ENCODE measurements at regions of chr19 and their contacts with region 1.

Region 1: GRCh38 chr19:39390755-39391592 is at the starts of genes MED29 and PAF1:
- DNase-seq: peak; percentile 92 to 99 (median 98)
- H3K4me3 ChIP-seq: peak within 1 kb of the TSS; percentile 96
- H3K4me3 Mint-ChIP-seq: peak within 1 kb of the TSS; percentile 88 to 96 (median 95)
- H3K27ac ChIP-seq: peak within 1 kb of the TSS; percentile 99
- H3K27ac Mint-ChIP-seq: peak within 1 kb of the TSS; percentile 95 to 100 (median 99)
- H3K4me1 ChIP-seq: peaks cover 20% of the 10 kb centered on the region
- H3K4me1 Mint-ChIP-seq: peaks cover 34 to 48% (median 42%) of the 10 kb centered on the region in 3 donors
- H3K27me3 ChIP-seq: no peaks in the 10 kb centered on the region
- H3K27me3 Mint-ChIP-seq: peaks cover 0 to 2% of the 10 kb centered on the region in 2 donors
- total RNA-seq, gene MED29: 39.3 to 39.6 TPM
- total RNA-seq, gene PAF1: 44.6 to 46.9 TPM

Region 2: DNA sequence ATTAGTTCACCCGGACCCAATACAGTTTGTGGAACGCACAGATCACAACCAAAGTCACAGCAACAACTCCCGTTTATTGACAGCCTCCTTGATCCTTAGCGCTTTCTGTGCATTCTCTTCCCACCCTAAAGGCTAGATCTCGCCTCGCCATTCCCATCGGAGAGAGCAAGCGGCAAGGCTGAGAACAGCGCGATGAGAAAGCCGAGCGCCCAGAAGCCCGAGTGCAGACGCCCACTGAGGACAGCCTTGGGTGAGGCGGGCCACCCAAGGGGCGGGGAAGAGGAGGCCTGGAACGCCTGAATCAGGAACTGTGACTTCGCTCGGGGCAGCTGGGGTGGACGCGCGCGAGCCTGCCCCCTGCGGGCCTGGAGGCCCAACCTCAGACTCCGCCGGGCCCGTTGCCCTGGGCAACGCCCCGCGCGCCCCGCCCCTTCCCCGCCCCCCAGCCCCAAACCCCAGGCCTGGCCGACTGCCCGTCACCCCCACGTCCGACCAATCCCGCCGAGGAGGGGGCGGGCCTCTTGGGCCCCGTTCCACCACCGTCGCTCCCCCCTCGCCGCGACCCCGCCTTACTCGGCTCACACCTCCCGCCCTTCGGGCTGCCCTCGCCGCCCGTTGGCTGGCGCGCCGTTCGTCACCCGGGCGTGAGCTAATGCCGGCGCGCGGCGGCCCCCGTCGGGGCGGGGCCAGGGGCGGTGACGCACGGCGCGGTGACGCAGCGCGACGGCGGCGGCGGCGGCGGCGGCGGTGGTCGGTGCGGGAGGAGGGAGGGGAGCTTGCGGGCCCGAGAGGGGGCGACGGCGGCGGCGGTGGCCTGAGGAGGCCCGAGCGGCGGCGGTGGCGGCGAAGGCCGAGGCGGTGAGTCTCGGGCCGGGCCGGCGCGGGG is 49.0 kb before region 1 on chr19 and contains the start of gene SAMD4B:
- CTCF ChIA-PET with region 1: interaction called, 8 read pairs
- POLR2A ChIA-PET with region 1: interaction called, 10 read pairs
- DNase-seq: peak; percentile 99 to 100 (median 100)
- H3K4me3 ChIP-seq: peak within 1 kb of the TSS; percentile 97
- H3K4me3 Mint-ChIP-seq: peak within 1 kb of the TSS; percentile 89 to 99 (median 95)
- H3K27ac ChIP-seq: peak within 1 kb of the TSS; percentile 86
- H3K27ac Mint-ChIP-seq: peak within 1 kb of the TSS; percentile 90 to 99 (median 94)
- H3K4me1 ChIP-seq: peaks cover 57% of the 10 kb centered on the region
- H3K4me1 Mint-ChIP-seq: peaks cover 55 to 75% (median 74%) of the 10 kb centered on the region in 3 donors
- H3K27me3 ChIP-seq: no peaks in the 10 kb centered on the region
- H3K27me3 Mint-ChIP-seq: peaks cover 0 to 1% of the 10 kb centered on the region in 2 donors
- total RNA-seq, gene SAMD4B: 54.3 to 55.6 TPM

Region 3: GRCh38 chr19:39352381-39353255 is 38.4 kb before region 1 on chr19:
- CTCF ChIA-PET with region 1: no interaction called
- POLR2A ChIA-PET with region 1: no interaction called
- DNase-seq: no peak
- H3K4me3 ChIP-seq: no peak overlapping the region
- H3K4me3 Mint-ChIP-seq: no peak overlapping the region
- H3K27ac ChIP-seq: no peak overlapping the region
- H3K27ac Mint-ChIP-seq: peak overlapping the region in 4 of 8 donors; percentile 23 to 82 (median 71)
- H3K4me1 ChIP-seq: no peaks in the 10 kb centered on the region
- H3K4me1 Mint-ChIP-seq: peaks cover 20 to 34% (median 22%) of the 10 kb centered on the region in 3 donors
- H3K27me3 ChIP-seq: no peaks in the 10 kb centered on the region
- H3K27me3 Mint-ChIP-seq: peaks cover 0 to 1% of the 10 kb centered on the region in 2 donors

Region 4: DNA sequence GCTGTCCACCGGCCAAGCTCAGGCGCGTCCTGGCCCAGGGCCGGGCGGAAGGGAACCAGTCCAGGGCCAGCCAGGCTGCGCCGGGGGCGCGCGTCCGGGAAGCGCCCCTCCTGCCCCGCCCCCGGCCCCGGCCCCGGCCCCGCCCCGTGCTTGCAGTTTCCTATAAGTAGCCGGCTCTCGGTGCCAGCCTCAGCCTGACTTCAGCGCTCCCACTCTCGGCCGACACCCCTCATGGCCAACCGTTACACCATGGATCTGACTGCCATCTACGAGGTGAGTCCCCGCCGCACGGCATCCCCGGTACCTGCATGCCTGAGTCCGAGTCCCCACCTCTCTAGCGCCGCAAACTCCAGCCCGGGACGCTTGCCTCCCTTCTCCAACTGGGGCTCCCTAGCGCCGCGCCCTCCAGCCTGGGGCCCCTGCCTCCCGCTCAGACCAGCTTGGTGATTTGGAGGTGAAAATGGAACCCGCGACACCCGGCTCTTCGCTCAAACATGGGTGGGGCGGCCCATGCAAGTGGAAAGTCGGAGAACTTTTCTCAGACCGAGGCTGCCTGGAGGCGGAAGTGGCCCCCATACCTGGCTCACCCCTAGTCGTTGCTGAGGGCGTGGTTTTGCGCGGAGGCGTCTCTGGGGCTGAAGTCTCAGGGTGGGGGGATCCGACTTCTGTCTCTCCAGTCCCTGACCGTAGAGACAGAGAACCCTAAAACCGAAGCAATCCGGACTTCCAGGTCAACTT is 15.9 kb after region 1 on chr19 and contains the start of gene ZFP36:
- CTCF ChIA-PET with region 1: interaction called, 207 read pairs
- POLR2A ChIA-PET with region 1: interaction called, 96 read pairs
- DNase-seq: peak; percentile 86 to 94 (median 87)
- H3K4me3 ChIP-seq: peak within 1 kb of the TSS; percentile 83
- H3K4me3 Mint-ChIP-seq: peak within 1 kb of the TSS; percentile 89 to 96 (median 92)
- H3K27ac ChIP-seq: peak within 1 kb of the TSS; percentile 97
- H3K27ac Mint-ChIP-seq: peak within 1 kb of the TSS; percentile 96 to 100 (median 100)
- H3K4me1 ChIP-seq: peaks cover 60% of the 10 kb centered on the region
- H3K4me1 Mint-ChIP-seq: peaks cover 50 to 67% (median 59%) of the 10 kb centered on the region in 3 donors
- H3K27me3 ChIP-seq: no peaks in the 10 kb centered on the region
- H3K27me3 Mint-ChIP-seq: peaks cover 0 to 36% of the 10 kb centered on the region in 2 donors
- total RNA-seq, gene ZFP36: 32.8 to 36.4 TPM

Region 5: DNA sequence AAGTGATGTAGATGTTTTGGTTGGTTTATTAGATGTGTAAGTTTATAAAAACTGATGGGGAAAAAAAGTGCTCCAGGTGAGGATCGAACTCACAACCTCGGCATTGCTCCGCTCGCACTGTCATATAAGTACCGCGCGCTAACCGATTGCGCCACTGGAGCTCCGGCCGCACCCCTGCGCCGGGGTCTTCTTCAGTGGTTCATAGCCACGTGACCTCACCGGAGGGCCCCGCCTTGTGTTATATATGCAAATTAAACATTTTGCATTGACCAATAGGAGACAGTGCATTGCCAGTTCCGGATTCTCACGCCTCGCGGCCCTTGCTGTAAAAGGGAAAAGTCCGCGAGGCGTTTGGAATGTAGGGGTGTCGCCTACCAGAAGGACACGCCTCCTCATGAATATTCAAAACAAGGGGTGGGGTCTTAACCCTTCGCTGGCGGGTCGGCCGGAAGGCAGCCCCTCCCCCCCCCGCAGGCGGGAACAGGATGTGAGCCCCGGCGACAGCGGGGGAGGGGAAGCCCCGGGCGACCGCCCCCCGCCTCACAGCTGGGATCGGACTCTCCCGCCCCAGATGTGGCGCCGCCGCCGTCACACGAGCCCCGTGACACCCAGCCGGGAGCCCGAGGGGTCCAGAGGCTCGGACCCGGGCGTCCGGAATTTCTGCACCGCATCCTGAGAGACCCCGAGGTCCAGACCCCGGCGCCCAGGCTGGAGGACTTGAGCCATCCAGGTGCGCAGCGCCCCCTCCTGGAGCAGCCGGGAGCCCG is 21.3 kb after region 1 on chr19 and contains the start of gene PLEKHG2:
- CTCF ChIA-PET with region 1: interaction called, 207 read pairs
- POLR2A ChIA-PET with region 1: interaction called, 96 read pairs
- DNase-seq: peak; percentile 93 to 99 (median 97)
- H3K4me3 ChIP-seq: peak within 1 kb of the TSS; percentile 93
- H3K4me3 Mint-ChIP-seq: peak within 1 kb of the TSS; percentile 89 to 96 (median 92)
- H3K27ac ChIP-seq: peak within 1 kb of the TSS; percentile 97
- H3K27ac Mint-ChIP-seq: peak within 1 kb of the TSS; percentile 96 to 100 (median 98)
- H3K4me1 ChIP-seq: peaks cover 28% of the 10 kb centered on the region
- H3K4me1 Mint-ChIP-seq: peaks cover 39 to 50% (median 46%) of the 10 kb centered on the region in 3 donors
- H3K27me3 ChIP-seq: no peaks in the 10 kb centered on the region
- H3K27me3 Mint-ChIP-seq: peaks cover 0 to 32% of the 10 kb centered on the region in 2 donors
- total RNA-seq, gene PLEKHG2: 35.2 to 36.4 TPM

Region 6: GRCh38 chr19:39423258-39424086 is 32.5 kb after region 1 on chr19:
- CTCF ChIA-PET with region 1: no interaction called
- POLR2A ChIA-PET with region 1: no interaction called
- DNase-seq: no peak
- H3K4me3 ChIP-seq: no peak overlapping the region
- H3K4me3 Mint-ChIP-seq: no peak overlapping the region
- H3K27ac ChIP-seq: no peak overlapping the region
- H3K27ac Mint-ChIP-seq: peak overlapping the region in 1 of 8 donors; percentile 56
- H3K4me1 ChIP-seq: no peaks in the 10 kb centered on the region
- H3K4me1 Mint-ChIP-seq: no peaks in the 10 kb centered on the region
- H3K27me3 ChIP-seq: no peaks in the 10 kb centered on the region
- H3K27me3 Mint-ChIP-seq: peaks cover 0 to 2% of the 10 kb centered on the region in 2 donors

Region 7: DNA sequence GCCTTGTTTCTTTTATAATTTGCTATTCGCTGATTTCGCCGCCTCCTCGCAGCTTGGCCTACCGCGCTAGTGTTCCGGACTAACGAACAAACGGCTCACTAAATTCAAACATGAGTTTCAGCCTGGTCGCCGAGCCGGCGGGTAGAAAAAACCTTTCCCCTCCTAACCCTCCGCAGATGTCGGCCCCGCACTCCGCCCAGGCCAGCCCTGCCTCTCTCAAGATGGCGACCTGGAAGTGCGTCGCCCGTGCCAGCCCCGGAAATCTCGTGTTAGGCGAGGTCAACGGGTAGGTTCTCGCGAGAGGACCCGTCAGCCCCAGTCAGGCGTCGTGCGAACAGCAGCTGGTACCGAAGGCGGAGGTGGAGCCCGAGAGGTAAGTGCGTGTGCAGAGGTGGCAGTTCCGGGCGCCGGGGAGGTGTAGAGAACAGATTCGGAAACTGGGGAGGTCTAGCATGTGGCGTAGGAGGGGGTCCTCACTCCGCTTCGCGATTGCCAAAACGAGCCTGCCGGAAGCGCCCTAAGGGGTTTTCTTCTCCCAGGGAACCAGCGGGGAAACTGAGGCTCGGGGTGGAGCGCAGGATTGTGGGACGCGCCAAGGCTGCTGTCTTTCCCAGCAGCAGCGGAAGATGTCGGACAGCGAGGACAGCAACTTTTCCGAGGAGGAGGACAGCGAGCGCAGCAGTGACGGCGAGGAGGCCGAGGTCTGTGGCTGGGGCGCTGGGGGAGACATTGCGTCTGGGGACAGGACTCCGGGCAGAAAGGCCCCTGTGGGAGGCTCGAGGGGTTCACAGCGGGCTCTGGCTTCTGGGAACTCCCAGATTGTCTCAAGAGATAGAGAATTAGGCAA is 54.5 kb after region 1 on chr19 and contains the start of gene SUPT5H:
- CTCF ChIA-PET with region 1: interaction called, 4 read pairs
- POLR2A ChIA-PET with region 1: interaction called, 10 read pairs
- DNase-seq: peak; percentile 97 to 99 (median 98)
- H3K4me3 ChIP-seq: peak within 1 kb of the TSS; percentile 89
- H3K4me3 Mint-ChIP-seq: peak within 1 kb of the TSS; percentile 93 to 100 (median 99)
- H3K27ac ChIP-seq: peak within 1 kb of the TSS; percentile 95
- H3K27ac Mint-ChIP-seq: peak within 1 kb of the TSS; percentile 93 to 100 (median 100)
- H3K4me1 ChIP-seq: peaks cover 48% of the 10 kb centered on the region
- H3K4me1 Mint-ChIP-seq: peaks cover 50 to 60% (median 59%) of the 10 kb centered on the region in 3 donors
- H3K27me3 ChIP-seq: no peaks in the 10 kb centered on the region
- H3K27me3 Mint-ChIP-seq: no peaks in the 10 kb centered on the region
- total RNA-seq, gene SUPT5H: 190 to 196 TPM

Measured in CD8-positive, alpha-beta memory T cell (primary cell).